ENCODE measurements at regions of chr15 and their contacts with region 1.

Region 1: GRCh38 chr15:47773163-47773562 is 55.9 kb downstream of the SEMA6D start:
- DNase-seq: no peak

Region 2: DNA sequence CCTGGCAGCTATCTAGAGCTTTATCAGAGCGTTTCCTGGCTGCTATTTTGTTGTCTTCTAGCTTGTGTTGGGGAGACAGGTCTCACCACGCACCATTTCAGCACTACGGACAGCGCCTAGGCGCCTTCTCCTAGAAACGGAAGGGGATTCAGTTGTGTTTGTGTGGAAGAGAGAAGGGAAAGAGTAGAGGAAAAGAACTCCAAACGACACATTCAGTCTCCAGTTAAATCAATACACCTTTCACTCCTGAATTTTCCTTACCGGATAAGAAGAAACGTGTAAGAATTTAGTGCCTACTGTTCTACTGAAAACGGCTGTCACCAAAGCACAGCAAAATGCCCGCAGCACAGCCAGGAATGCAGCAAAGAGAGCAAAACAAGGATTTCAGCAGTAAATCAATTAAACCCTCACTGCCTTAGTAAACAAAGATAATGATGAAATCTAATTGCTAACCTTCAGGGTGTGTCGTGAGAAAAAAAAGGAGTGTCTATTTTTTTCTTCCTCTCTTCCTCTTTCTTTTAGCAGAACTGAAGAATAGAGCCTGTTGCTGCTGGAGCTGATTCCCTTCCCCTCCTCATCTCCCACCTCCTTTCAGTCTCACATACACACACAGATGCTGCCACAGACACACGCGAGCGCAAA is 417.9 kb after region 1 on chr15:
- intact Hi-C with region 1: loop called in 1 of 2 experiments (anchors 5 kb)
- DNase-seq: peak; percentile 88